ENCODE measurements at regions of chr11 and their contacts with region 1.

Region 1: DNA sequence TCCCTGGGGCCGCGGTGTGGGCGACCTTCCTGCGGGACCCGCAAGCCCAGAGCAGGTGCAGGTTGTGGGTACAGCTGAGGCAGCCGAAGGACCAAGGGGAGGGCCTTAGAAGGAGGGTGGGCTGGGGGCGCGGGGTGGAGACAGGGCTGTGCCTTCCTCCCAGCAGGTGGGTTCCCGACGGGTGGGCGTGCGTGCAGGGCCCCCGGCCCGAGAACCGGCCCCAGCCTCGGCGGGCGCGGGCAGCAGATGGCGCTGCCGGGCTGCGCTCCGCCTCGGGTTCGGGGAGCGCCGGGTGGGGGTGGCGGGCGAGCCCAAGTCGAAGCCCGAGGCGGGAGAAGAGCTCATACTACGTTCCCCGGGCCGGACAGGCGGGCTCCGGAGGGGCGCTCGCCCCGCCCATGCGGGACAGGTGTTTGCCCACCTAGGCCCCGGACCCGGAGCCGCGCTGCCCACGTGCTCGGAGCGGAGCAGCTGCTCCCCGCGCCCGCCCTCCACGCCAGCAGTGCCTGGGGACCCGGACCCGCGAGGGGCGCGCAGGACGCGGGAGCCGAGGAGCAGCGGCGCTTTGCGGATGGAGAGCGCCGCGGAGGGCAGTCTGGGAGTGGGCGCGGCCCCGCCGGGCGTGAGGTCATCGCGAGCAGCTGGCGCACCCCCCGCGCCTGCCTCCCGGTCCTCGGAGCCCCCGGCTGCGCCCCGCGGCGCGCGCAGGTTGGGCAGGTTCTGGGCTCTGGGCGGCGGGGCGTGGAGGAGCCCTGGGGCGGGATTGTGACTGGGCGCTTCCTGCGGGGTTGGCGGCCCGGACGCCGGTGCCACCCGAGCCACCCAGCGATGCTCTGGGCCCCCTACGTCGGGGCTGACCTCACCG is 25.3 kb downstream of the DUSP8 start:
- DNase-seq: peak; percentile 60
- ATAC-seq: peak; percentile 79
- H3K4me3 Mint-ChIP-seq: no peak overlapping the region
- H3K27ac Mint-ChIP-seq: no peak overlapping the region
- H3K4me1 Mint-ChIP-seq: no peaks in the 10 kb centered on the region
- H3K27me3 Mint-ChIP-seq: peaks cover 22% of the 10 kb centered on the region
- CTCF ChIP-seq: peak; percentile 87

Region 2: DNA sequence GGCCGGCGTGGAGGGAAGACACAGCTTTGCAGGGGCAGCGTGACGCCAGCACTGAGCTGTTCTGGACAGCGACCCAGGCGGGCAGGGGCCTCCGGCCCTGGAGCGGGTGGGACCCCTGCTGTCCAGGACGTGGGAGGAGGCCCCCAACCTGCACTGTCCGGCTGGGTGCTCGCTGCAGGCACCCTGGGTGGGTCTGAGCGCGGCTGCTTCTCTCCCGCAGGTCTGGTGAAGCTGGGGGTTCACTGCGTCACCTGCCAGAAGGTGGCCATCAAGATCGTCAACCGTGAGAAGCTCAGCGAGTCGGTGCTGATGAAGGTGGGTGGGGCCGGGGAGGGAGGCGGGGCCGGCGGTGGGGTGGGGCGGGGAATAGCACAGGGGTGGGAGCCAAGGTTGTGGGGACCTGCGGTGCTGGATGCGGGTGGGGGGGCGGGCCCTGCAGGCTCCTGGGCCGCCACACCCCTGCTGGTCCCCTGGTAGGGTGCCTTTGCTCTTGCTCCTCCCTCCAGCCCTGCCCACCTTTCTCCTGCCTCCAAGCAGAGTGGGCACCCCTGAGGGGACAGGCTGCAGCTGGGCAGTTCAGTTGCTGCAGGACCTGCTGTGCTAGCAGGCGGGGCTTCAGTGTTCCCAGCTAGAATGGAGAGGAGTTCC is 110.8 kb before region 1 on chr11:
- CTCF ChIA-PET with region 1: no interaction called
- POLR2A ChIA-PET with region 1: no interaction called
- intact Hi-C with region 1: no loop called
- DNase-seq: peak; percentile 21
- ATAC-seq: peak; percentile 62
- H3K4me3 Mint-ChIP-seq: no peak overlapping the region
- H3K27ac Mint-ChIP-seq: no peak overlapping the region
- H3K4me1 Mint-ChIP-seq: no peaks in the 10 kb centered on the region
- H3K27me3 Mint-ChIP-seq: no peaks in the 10 kb centered on the region
- CTCF ChIP-seq: no peak

Region 3: DNA sequence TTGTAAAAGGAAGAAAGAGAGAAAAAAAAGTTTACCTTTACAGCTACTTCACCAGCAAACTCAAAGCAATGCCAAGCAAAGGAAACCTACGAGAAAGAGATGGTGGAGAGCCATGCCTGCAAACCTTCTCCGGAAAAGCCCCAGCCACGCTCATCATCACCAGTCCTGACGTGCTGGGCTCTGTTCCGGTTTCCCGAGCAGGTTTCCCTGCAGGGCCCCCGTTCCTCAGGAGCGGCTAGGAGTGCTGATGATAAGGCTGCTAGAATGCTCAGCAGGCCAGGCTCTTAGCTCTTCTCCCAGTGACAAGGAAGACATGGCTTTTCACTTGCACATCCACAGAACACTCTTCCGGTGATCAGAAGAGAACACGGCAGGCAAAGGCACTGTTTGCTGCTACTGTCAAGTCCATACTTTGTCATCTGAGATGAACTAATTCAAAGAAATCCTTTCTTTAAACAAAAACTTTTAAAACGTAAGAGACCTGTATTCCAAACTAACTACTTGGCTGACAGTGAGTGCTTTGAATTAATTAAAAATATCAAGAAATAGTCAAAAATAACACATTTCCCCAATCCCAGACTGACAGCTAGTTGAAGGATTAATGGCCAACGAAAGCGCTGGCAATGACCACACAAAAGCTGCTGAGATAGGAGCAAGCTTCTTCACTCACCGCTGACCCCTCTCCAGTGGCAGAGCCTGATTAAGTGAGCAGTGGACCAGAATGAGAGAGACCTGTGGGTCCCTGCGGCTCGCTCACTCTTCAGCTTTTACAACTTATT is 10.5 kb before region 1 on chr11:
- CTCF ChIA-PET with region 1: interaction called, 13 read pairs
- POLR2A ChIA-PET with region 1: no interaction called
- intact Hi-C with region 1: no loop called
- DNase-seq: no peak
- ATAC-seq: no peak
- H3K4me3 Mint-ChIP-seq: no peak overlapping the region
- H3K27ac Mint-ChIP-seq: no peak overlapping the region
- H3K4me1 Mint-ChIP-seq: peaks cover 22% of the 10 kb centered on the region
- H3K27me3 Mint-ChIP-seq: peaks cover 2% of the 10 kb centered on the region
- CTCF ChIP-seq: no peak

Region 4: DNA sequence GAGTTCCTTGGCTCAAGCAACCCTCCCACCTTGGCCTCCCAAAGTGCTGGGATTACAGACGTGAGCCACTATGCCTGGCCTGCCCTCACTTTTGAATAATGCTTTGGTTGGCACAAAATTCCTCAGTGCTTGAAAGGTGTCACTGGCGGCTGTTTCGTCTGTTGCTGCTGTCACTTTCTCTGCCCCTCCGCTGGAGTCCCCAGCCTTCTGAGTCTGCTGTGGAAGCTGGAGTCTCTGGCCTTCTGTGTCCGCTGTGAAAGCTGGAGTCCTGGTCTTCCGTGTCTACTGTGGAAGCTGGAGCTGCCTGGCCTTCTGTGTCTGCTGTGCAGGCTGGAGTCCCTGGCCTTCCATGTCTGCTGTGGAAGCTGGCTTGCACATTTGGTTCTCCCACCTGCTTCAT is 43.2 kb after region 1 on chr11:
- CTCF ChIA-PET with region 1: interaction called, 11 read pairs
- POLR2A ChIA-PET with region 1: no interaction called
- intact Hi-C with region 1: no loop called
- DNase-seq: no peak
- ATAC-seq: no peak
- H3K4me3 Mint-ChIP-seq: no peak overlapping the region
- H3K27ac Mint-ChIP-seq: no peak overlapping the region
- H3K4me1 Mint-ChIP-seq: peaks cover 14% of the 10 kb centered on the region
- H3K27me3 Mint-ChIP-seq: peaks cover 11% of the 10 kb centered on the region
- CTCF ChIP-seq: no peak

Region 5: DNA sequence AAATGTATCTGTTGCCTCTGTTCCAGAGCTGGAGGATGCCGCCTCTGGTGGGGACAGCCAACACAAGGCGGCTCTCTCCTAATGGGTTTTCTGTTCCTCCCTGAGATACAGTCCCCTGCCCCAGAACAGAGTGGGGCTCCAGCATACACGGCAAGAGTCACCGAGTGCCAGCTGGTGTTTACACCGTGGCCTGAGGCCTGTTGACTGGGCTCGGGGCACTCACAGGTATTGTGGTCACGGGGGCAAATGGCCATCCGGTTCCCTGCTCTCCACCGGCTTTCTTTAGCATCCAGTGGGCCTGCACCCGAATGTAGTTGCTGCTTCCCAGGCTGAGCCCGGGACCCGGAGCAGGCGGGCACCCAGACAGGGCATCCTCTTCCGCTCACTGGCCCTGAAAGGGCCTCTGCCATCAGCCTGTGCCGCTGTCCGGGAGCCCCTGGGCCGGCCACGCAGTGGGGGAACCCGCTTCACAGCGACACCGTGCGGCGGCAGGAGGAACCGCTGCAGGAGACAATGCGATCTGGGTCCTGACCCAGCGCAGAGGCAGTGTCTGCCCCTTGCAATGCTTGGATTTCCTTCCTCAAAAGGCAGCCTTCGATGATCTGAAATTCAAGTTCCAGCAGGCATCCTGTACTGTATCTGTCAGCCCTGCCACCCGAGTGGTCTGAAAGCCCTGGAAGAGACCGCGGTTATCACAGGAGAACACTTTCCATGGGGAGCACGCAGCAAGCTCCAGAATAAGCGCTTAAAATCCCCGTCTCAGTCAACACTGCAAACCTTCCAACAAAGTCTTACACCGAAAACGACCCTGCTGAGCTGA is 81.9 kb after region 1 on chr11:
- CTCF ChIA-PET with region 1: interaction called, 11 read pairs
- POLR2A ChIA-PET with region 1: no interaction called
- intact Hi-C with region 1: no loop called
- DNase-seq: peak; percentile 63
- ATAC-seq: peak; percentile 99
- H3K4me3 Mint-ChIP-seq: no peak overlapping the region
- H3K27ac Mint-ChIP-seq: no peak overlapping the region
- H3K4me1 Mint-ChIP-seq: no peaks in the 10 kb centered on the region
- H3K27me3 Mint-ChIP-seq: peaks cover 14% of the 10 kb centered on the region
- CTCF ChIP-seq: peak; percentile 97

Region 6: GRCh38 chr11:1640076-1640946 is 93.5 kb after region 1 on chr11:
- CTCF ChIA-PET with region 1: interaction called, 10 read pairs
- POLR2A ChIA-PET with region 1: no interaction called
- intact Hi-C with region 1: no loop called
- DNase-seq: peak; percentile 26
- ATAC-seq: peak; percentile 42
- H3K4me3 Mint-ChIP-seq: no peak overlapping the region
- H3K27ac Mint-ChIP-seq: no peak overlapping the region
- H3K4me1 Mint-ChIP-seq: no peaks in the 10 kb centered on the region
- H3K27me3 Mint-ChIP-seq: peaks cover 9% of the 10 kb centered on the region
- CTCF ChIP-seq: peak; percentile 95

Measured in activated CD8-positive, alpha-beta T cell treated with anti-CD3 and anti-CD28 coated beads for 36 hours (primary cell).